ENCODE measurements at regions of chr2 and their contacts with region 1.

Region 1: DNA sequence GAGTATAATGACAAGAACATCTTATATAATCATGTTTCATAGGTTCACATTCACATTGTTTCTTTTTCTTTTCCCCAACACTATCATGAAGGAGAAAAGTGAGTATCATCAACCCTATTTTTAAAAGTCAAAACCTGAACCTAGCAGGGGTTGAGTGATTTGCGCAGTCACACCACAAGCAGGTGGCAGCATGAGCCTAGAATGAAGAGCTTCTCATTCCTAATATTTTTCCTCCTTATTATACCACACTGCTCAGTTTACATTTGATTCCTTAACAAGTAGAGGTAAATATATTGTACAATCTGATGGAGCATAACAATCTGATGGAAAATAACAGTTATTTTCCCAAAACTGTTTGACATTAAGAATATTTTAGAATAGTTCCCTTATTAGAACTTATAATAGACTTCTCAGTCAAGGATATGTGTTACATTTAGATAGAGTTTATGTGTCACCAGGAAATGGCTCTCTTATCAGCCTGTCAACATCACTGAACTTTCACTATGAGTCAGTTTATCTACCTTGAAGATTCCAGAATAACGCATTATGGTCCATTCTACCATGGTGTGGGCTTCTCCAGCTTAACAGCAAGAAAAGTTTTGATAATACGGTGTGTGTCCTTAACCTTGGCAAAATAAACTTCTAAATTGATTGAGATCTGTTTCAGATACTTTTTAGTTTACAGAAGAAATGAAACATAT is 119.5 kb downstream of the NEB start:
- DNase-seq: no peak
- ATAC-seq: no peak
- H3K4me3 ChIP-seq: no peak overlapping the region
- H3K4me3 Mint-ChIP-seq: peak overlapping the region in 2 of 10 donors; percentile 17 to 70
- H3K27ac ChIP-seq: no peak overlapping the region
- H3K27ac Mint-ChIP-seq: peak overlapping the region in 3 of 9 donors; percentile 14 to 54 (median 28)
- H3K4me1 ChIP-seq: no peaks in the 10 kb centered on the region
- H3K4me1 Mint-ChIP-seq: peaks cover 10 to 26% (median 14%) of the 10 kb centered on the region in 7 donors
- H3K27me3 ChIP-seq: no peaks in the 10 kb centered on the region
- H3K27me3 Mint-ChIP-seq: peaks cover 0 to 6% (median 0%) of the 10 kb centered on the region in 5 donors

Region 2: GRCh38 chr2:151632993-151633565 is 18.3 kb after region 1 on chr2:
- CTCF ChIA-PET with region 1: no interaction called
- POLR2A ChIA-PET with region 1: no interaction called
- intact Hi-C with region 1: loop called in 1 of 2 experiments (anchors 1 kb)
- DNase-seq: no peak
- ATAC-seq: no peak
- H3K4me3 ChIP-seq: no peak overlapping the region
- H3K4me3 Mint-ChIP-seq: no peak overlapping the region
- H3K27ac ChIP-seq: no peak overlapping the region
- H3K27ac Mint-ChIP-seq: no peak overlapping the region
- H3K4me1 ChIP-seq: peaks cover 16 to 17% of the 10 kb centered on the region in 2 donors
- H3K4me1 Mint-ChIP-seq: peaks cover 13 to 33% (median 24%) of the 10 kb centered on the region in 7 donors
- H3K27me3 ChIP-seq: no peaks in the 10 kb centered on the region
- H3K27me3 Mint-ChIP-seq: no peaks in the 10 kb centered on the region

Region 3: GRCh38 chr2:151999053-151999452 is 384.3 kb after region 1 on chr2:
- CTCF ChIA-PET with region 1: no interaction called
- POLR2A ChIA-PET with region 1: no interaction called
- intact Hi-C with region 1: loop called in 1 of 2 experiments (anchors 1 kb)
- DNase-seq: peak in 7 of 9 donors; percentile 11 to 38 (median 14)
- ATAC-seq: peak; percentile 77
- H3K4me3 ChIP-seq: no peak overlapping the region
- H3K4me3 Mint-ChIP-seq: no peak overlapping the region
- H3K27ac ChIP-seq: no peak overlapping the region
- H3K27ac Mint-ChIP-seq: no peak overlapping the region
- H3K4me1 ChIP-seq: no peaks in the 10 kb centered on the region
- H3K4me1 Mint-ChIP-seq: peaks cover 0 to under 1% (median 0%) of the 10 kb centered on the region in 7 donors
- H3K27me3 ChIP-seq: no peaks in the 10 kb centered on the region
- H3K27me3 Mint-ChIP-seq: peaks cover 0 to 1% (median 0%) of the 10 kb centered on the region in 5 donors